ENCODE measurements at regions of chr5 and their contacts with region 1.

Region 1: GRCh38 chr5:111703662-111704061 is 53.3 kb downstream of the NREP start:
- DNase-seq: peak; percentile 93
- H3K4me3 ChIP-seq: peak overlapping the region; percentile 67
- H3K27ac ChIP-seq: peak overlapping the region; percentile 98
- H3K4me1 ChIP-seq: peaks cover 62% of the 10 kb centered on the region
- CTCF ChIP-seq: no peak

Region 2: DNA sequence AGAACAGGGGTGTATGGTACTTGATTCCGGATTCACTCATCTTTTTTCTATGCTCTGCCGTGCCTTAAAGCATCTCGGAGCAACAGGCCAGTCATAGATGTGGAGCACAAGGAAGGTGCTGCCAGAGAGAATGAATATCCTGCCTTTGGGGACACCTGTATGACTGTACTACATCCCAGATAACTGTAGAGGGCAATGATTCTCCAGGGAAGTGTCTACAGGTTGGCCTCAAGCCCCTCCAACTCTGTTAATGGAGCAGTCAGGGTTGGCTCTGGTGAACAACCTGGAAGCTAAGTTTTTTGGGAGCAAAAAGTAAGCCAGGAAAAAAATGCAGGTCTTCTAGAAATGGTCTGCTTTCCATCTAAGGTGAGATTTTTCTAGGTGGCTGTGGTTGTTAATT is 17.7 kb before region 1 on chr5:
- CTCF ChIA-PET with region 1: no interaction called
- POLR2A ChIA-PET with region 1: interaction called, 14 read pairs
- intact Hi-C with region 1: no loop called
- DNase-seq: peak; percentile 65
- H3K4me3 ChIP-seq: no peak overlapping the region
- H3K27ac ChIP-seq: no peak overlapping the region
- H3K4me1 ChIP-seq: peaks cover 10% of the 10 kb centered on the region
- CTCF ChIP-seq: peak; percentile 73

Region 3: GRCh38 chr5:111757355-111758283 is 54.0 kb after region 1 on chr5:
- CTCF ChIA-PET with region 1: no interaction called
- POLR2A ChIA-PET with region 1: interaction called, 13 read pairs
- intact Hi-C with region 1: loop called (anchors 1 kb)
- DNase-seq: peak; percentile 90
- H3K4me3 ChIP-seq: peak overlapping the region; percentile 79
- H3K27ac ChIP-seq: peak overlapping the region; percentile 88
- H3K4me1 ChIP-seq: peaks cover 36% of the 10 kb centered on the region
- CTCF ChIP-seq: peak; percentile 42; the same call in 1 of the 2 replicates